Heart left ventricle (tissue), 16 donors: ENCODE measurements at regions of chr11 and their contacts with region 1.

Region 1: DNA sequence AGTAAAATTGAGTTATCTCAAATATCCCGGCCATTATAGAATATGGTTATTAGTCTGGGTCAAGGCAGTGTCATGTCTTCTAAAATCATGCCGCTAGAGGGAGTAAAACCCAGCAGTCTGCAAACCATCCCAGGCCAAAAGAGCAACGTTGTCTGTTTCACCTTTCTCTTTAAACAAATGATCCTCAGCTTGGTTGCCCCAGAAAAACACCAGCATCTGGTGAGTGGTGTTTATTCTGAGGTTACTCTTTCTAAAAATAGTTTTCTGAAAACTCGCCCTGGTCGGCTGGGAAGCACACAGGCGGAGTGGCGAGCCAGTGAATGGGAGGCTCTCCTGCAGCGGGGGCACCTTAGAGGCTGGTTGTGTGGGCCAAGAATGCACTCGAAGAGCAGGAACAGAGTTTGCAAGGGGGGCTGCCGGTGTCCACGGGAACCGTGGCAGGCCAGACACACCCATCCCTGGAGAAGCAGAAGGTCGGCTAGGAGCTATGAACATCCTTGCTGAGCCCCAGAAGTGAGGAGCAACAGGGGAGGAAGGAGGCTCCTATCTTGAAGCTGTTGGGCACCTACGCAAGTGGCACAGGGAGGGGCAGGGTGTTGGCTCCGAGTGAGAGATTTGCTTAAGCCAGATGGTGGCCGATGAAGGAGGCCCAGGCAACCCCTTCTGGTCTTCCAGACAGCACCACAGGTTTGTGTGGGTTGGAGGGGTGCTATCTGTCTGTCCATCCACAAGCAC is 297.1 kb downstream of the ETS1 start:
- DNase-seq: peak; percentile 46 to 73 (median 70)
- ATAC-seq: peak; percentile 74 to 91 (median 88)
- H3K4me3 ChIP-seq: peak overlapping the region in 9 of 12 donors; percentile 4 to 44 (median 18)
- H3K27ac ChIP-seq: peak overlapping the region in 9 of 12 donors; percentile 27 to 87 (median 51)
- H3K4me1 ChIP-seq: peaks cover 3 to 52% (median 27%) of the 10 kb centered on the region in 12 donors
- H3K27me3 ChIP-seq: no peaks in the 10 kb centered on the region
- CTCF ChIP-seq: peak; percentile 83 to 91 (median 86)
- POLR2A ChIP-seq: peak in 1 of 2 donors; percentile 18

Region 2: DNA sequence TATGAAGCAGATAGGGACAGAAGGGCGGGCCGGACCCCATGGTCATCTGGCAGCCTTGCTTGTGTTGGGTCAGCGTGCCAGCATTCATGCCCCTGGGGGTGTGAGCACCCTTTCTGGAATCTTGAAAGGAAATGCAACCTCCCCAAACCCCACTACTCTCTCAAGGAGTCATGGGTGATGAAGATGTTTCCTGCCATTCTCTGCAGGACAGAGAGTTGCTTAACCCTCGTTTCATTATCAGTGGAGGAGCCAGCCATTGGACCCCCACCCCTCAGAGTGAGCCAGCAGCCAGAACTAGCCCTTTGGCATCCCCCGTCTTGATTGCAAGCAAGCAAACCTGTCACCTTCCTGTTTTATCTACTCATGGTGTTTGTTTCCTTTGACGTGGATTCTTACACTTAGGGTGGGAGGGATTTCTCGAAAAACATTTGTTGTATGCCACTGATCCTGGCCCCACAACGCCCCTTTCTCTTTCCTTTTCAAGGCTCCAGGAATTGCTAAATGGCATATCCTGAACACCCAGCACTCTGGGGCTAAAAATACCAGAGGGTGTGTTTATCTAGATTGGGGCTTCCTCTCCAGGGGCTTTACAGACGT is 38.8 kb after region 1 on chr11:
- intact Hi-C with region 1: loop called in 2 of 10 experiments (anchors 2 to 5 kb)
- DNase-seq: peak in 4 of 5 donors; percentile 27 to 66 (median 45)
- ATAC-seq: peak; percentile 74 to 89 (median 84)
- H3K4me3 ChIP-seq: no peak overlapping the region
- H3K27ac ChIP-seq: peak overlapping the region; percentile 19 to 85 (median 66)
- H3K4me1 ChIP-seq: peaks cover 0 to 46% (median 15%) of the 10 kb centered on the region in 12 donors
- H3K27me3 ChIP-seq: no peaks in the 10 kb centered on the region
- CTCF ChIP-seq: no peak
- POLR2A ChIP-seq: no peak

Region 3: GRCh38 chr11:128412847-128413791 is 122.8 kb after region 1 on chr11:
- intact Hi-C with region 1: loop called in 1 of 10 experiments (anchors 10 kb)
- DNase-seq: no peak
- ATAC-seq: no peak
- H3K4me3 ChIP-seq: no peak overlapping the region
- H3K27ac ChIP-seq: peak overlapping the region in 2 of 12 donors; percentile 4 to 33
- H3K4me1 ChIP-seq: peaks cover 0 to 44% (median 10%) of the 10 kb centered on the region in 12 donors
- H3K27me3 ChIP-seq: no peaks in the 10 kb centered on the region
- CTCF ChIP-seq: no peak
- POLR2A ChIP-seq: no peak

Region 4: DNA sequence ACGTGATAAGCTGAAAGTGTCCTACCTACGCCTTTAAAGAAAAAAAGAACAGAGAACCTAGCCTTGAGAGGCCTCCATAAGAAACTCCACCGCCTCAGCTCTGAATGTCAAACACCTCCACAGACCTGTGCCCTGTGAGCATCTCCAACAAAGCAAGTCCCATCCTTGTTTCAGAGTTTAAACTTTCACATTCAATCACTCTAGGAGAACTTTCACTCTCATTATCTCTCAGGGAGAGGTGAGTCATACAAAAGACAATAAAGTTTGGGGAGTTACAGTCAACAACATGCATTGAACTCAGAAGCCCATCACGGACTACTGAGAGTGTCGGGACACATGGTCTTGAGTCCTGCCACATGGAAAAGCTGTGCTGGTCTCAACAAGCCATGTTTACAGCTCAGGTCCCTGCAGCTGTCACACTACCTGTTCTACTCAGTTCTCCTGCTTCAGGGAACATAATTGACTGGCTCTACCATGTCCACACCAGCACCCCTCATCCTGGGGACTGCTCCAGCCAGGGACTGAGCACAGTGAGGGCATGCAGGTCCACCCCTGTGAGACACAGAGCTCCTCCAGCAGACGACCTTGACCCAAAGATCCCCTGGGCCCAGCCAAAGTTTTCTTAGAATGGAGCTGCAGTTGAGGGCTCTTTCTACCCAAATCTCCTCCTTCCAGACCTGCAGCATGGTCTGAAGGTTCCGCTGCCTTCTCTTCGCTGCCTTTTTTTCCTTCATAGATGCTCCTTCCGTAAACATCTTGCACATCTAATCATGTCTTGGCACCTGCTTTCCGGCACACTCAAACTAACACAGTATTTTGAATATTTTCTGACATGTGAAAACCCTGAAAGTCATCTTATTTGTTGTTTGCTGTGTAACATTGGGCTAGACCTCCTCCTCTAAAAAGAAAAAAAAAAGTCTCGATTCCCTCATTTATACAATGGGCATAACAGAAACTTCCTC is 182.1 kb after region 1 on chr11:
- intact Hi-C with region 1: loop called in 6 of 10 experiments (anchors 5 to 10 kb)
- DNase-seq: no peak
- ATAC-seq: peak in 1 of 4 donors; percentile 9
- H3K4me3 ChIP-seq: peak overlapping the region in 1 of 12 donors; percentile 6
- H3K27ac ChIP-seq: peak overlapping the region in 7 of 12 donors; percentile 0 to 83 (median 35)
- H3K4me1 ChIP-seq: peaks cover 17 to 100% (median 90%) of the 10 kb centered on the region in 12 donors
- H3K27me3 ChIP-seq: no peaks in the 10 kb centered on the region
- CTCF ChIP-seq: no peak
- POLR2A ChIP-seq: no peak

Region 5: GRCh38 chr11:128552783-128553661 is 262.7 kb after region 1 on chr11:
- intact Hi-C with region 1: loop called in 7 of 10 experiments (anchors 2 to 10 kb)
- DNase-seq: no peak
- ATAC-seq: peak in 2 of 4 donors; percentile 20 to 45
- H3K4me3 ChIP-seq: peak overlapping the region in 1 of 12 donors; percentile 8
- H3K27ac ChIP-seq: peak overlapping the region in 10 of 12 donors; percentile 6 to 63 (median 38)
- H3K4me1 ChIP-seq: peaks cover 0 to 66% (median 31%) of the 10 kb centered on the region in 12 donors
- H3K27me3 ChIP-seq: no peaks in the 10 kb centered on the region
- CTCF ChIP-seq: no peak
- POLR2A ChIP-seq: no peak

Region 6: DNA sequence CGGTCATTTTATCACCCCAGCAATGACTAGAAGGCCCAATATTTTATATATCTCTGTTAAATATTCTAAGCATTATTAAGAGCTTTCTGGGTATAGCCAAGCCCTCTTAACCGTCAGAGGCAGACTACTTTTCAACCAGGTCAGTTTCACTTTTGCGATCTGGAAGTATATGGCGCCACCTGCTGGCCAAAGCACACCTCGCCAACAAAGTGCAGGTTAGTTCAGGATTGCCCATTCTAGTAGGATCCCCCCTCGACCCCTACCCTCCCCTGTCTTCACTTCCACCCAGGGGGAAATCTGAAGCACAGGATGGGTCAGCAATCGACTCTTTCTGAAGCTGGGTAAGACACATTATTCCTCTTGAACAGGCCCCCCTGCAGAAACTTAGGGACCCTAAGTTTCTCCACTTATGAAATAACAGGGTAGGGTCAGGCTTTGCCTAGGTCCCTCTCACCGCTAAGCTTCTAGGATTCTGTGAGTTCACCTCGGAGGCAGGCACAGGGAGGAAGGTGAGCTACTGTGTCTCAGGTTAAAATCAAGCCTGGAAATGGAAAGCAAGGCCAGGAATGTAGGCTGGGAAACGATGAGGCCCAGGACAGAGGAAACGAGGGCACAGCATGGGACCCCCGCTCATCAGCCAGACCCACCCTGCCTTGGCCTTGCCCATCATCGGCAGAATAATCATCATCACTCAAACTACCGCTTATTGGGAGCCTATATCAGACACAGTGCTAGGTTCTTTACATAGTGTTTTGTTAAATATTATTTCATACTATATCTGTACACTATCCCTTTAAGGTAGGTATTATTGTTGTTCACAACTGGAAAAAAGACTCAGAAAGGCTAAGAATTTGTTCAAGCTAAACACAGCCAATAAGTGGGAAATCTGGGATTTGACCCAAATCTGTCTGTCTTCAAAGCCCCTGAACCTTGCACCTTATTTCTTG is 541.2 kb after region 1 on chr11:
- intact Hi-C with region 1: loop called (anchors 2 to 10 kb)
- DNase-seq: peak; percentile 68 to 89 (median 79)
- ATAC-seq: peak; percentile 32 to 79 (median 74)
- H3K4me3 ChIP-seq: peak overlapping the region in 7 of 12 donors; percentile 3 to 37 (median 28)
- H3K27ac ChIP-seq: peak overlapping the region in 3 of 12 donors; percentile 2 to 42 (median 28)
- H3K4me1 ChIP-seq: peaks cover 0 to 41% (median 18%) of the 10 kb centered on the region in 12 donors
- H3K27me3 ChIP-seq: no peaks in the 10 kb centered on the region
- CTCF ChIP-seq: peak; percentile 84 to 95 (median 92)
- POLR2A ChIP-seq: no peak